GM10248 (cell line): ENCODE measurements at regions of chr14 and their contacts with region 1.

Region 1: DNA sequence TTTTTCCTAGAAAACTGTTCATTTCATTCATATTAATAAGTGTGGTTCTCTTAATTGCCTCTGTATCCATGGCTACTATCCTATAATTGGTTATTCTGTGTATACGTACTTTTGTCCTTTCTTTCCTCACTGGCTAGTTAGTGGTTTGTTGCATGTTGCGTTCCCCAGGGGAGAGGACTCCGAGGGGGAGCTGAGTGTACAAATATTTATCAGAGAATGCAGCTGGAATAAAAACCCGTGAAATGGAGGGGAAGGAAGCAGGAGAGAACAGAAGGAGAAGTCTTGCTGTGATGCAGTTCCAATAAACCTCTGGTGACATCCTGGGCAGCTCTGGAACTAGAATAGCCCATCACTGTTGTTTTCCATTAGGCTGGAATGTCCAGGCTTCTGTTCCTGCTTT is 117.1 kb upstream of the RGS6 start:
- DNase-seq: no peak
- CTCF ChIP-seq: no peak

Region 2: DNA sequence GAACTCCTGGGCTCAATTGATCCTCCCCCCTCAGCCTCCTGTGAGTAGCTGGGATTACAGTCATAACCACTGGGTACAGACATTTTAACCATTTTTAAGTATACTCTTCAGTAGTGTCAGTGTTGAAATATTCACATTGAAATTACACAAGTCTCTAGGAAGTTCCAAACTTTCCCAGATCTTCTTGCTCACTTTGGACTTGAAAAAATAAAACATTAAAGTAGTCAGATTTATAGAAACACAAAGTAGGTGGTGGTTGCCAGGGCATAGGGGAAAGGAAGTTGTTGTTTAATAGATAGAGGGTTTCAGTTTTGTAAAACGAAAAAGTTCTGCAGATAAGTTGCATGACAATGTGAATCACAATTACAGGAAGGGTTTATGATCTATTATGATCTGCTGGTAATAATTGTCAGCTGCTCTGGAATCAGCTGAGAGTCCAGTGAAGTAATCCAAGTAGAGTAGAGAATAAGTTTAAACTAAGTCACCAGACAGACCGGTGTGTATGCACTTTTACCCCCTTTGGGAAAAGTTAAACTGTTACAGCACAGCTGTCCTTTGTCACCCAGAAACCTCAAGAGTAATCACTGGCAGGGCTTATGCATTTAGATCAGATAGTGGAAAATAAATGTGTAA is 880.5 kb before region 1 on chr14:
- CTCF ChIA-PET with region 1: no interaction called
- POLR2A ChIA-PET with region 1: no interaction called
- DNase-seq: peak; percentile 30
- CTCF ChIP-seq: no peak

Region 3: DNA sequence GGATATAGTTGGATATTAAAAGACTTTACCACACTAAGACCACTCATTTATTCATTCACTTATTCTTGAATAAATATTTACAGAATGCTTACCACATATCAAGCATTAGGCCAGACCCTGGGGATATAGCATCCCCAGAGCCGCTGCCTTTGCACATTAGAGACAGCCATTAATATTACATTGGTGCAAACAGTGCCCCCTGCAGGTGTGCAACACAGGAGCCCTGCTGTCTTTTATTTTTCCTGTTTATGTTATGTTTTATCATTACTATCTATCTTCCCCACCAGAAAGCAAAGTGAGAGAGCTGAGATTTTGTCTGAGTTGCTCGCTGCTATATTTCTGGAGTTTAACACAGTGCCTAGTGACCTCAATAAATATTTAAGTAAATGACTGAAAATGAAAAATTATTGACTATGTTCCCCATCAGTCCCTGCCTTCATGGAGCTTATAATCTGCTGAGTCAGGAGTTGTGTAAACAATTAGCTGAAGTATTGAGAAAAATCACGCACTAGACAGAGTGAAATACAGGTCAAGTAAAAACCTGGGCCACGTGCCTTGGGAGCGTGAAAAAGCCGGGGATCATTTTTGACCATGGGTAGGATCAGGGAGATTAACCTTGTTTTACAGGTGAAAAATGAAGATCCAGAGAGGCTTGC is 606.3 kb before region 1 on chr14:
- CTCF ChIA-PET with region 1: no interaction called
- POLR2A ChIA-PET with region 1: interaction called, 10 read pairs
- DNase-seq: no peak
- CTCF ChIP-seq: no peak